ENCODE measurements at regions of chr1 and their contacts with region 1.

Region 1: GRCh38 chr1:172745014-172745413 is 86.1 kb downstream of the FASLG start:
- DNase-seq: peak; percentile 82 to 87 (median 86)
- H3K4me3 ChIP-seq: no peak overlapping the region
- H3K27ac ChIP-seq: no peak overlapping the region
- H3K4me1 ChIP-seq: peaks cover 19 to 26% (median 22%) of the 10 kb centered on the region in 4 experiments
- H3K27me3 ChIP-seq: no peaks in the 10 kb centered on the region

Region 2: GRCh38 chr1:172727956-172728603 is 16.9 kb before region 1 on chr1:
- CTCF ChIA-PET with region 1: interaction called, 13 read pairs
- POLR2A ChIA-PET with region 1: interaction called, 4 read pairs
- DNase-seq: peak; percentile 50 to 80 (median 68)
- H3K4me3 ChIP-seq: no peak overlapping the region
- H3K27ac ChIP-seq: no peak overlapping the region
- H3K4me1 ChIP-seq: peaks cover 0 to 22% (median 18%) of the 10 kb centered on the region in 4 experiments
- H3K27me3 ChIP-seq: no peaks in the 10 kb centered on the region

Region 3: DNA sequence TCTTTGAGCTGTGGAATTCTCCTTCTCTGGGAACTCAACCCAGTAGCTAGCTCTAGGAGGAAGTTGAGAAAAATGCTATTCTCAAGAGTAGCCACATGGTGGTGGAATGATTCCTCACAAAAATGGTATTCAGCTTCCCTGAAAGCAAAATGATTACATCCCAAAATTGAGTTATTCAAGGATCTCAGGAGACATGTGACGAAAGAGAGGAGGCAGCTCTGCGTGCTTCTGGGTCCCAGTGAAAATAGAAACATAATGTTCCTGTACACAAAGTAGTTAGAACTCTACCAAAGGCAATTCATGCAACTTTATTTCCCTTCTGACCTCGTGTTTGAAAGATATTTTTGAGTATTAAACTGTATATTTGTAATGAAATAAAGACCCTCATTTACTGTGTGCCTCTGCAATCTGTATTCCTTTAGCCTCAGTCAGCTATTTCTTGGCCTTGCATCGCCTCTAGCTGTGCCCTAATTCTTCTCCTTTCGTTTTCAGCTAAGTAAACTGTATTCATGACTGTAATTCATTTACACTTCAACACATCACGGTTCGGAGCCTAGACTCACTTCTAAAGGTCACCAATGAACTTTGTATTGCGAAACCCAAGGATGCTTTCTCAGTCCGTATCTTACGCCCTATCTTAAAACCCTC is 81.2 kb after region 1 on chr1:
- CTCF ChIA-PET with region 1: interaction called, 14 read pairs
- POLR2A ChIA-PET with region 1: no interaction called
- DNase-seq: peak; percentile 55 to 62 (median 57)
- H3K4me3 ChIP-seq: peak overlapping the region in 4 of 7 experiments; percentile 9 to 69 (median 44)
- H3K27ac ChIP-seq: no peak overlapping the region
- H3K4me1 ChIP-seq: peaks cover 6 to 54% (median 35%) of the 10 kb centered on the region in 4 experiments
- H3K27me3 ChIP-seq: no peaks in the 10 kb centered on the region

Region 4: GRCh38 chr1:173212952-173213491 is 468.0 kb after region 1 on chr1:
- CTCF ChIA-PET with region 1: interaction called, 222 read pairs
- POLR2A ChIA-PET with region 1: no interaction called
- DNase-seq: no peak
- H3K4me3 ChIP-seq: no peak overlapping the region
- H3K27ac ChIP-seq: no peak overlapping the region
- H3K4me1 ChIP-seq: peaks cover 8 to 40% (median 18%) of the 10 kb centered on the region in 4 experiments
- H3K27me3 ChIP-seq: no peaks in the 10 kb centered on the region

Region 5: GRCh38 chr1:173429471-173430402 is 684.7 kb after region 1 on chr1:
- CTCF ChIA-PET with region 1: interaction called, 29 read pairs
- POLR2A ChIA-PET with region 1: no interaction called
- DNase-seq: peak; percentile 74 to 88 (median 85)
- H3K4me3 ChIP-seq: peak overlapping the region in 6 of 7 experiments; percentile 2 to 72 (median 40)
- H3K27ac ChIP-seq: peak overlapping the region in 1 of 2 experiments; percentile 68
- H3K4me1 ChIP-seq: peaks cover 11 to 24% (median 16%) of the 10 kb centered on the region in 4 experiments
- H3K27me3 ChIP-seq: no peaks in the 10 kb centered on the region

Measured in common myeloid progenitor, CD34-positive (primary cell).